SK-N-SH (cell line): ENCODE measurements at regions of chr1 and their contacts with region 1.

Region 1: DNA sequence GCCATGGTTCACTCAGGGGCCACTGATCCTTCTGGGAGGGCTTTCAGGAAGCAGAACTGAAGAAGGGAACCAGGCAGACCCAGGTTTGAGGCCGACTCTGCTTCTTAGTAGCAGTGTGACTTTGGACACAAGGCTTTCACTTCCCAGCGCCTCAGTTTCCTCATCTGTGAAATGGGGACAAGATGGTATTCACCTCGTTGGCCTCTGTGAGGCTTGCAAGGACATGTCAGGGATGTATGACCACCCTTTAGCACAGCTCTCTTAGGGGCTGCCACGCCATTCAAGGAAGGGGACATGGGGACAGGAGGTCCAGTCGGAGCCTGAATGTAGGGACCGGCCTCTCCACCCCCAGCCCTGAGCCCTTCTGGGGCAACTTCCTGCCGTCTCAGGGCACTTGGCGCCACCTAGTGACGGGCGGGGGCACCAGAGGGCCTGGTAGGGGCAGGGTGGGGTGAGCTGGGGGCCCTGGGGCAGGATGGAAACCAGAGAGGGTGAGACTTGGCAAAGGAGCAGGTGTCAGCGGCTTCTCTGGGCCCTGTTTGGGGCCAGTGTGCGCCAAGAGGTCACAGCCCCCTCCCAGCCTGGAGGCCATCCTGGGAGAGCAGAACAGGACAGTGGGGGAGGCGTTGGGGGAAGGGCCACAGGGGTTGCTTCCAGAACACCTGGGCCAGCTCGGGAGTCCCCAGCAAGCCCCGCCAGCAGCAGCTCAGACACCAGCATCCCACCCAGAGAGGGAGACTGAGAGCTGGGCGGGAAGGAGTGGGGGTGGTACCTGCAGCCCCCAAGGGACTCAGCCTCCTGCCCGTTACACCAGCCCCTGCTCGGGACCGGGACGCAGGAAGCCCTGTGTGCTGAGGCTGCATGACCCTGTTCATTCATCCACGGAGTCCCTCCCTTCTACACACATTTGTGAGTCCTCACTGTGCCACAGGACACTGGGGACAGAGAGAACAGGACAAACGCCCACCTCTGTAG is 102.5 kb upstream of the TARDBP start:
- DNase-seq: peak; percentile 85
- H3K4me3 ChIP-seq: no peak overlapping the region
- H3K27ac ChIP-seq: peak overlapping the region in 1 of 2 experiments; percentile 62; a peak in 2 of 4 replicates
- H3K4me1 ChIP-seq: peaks cover 0 to 38% of the 10 kb centered on the region in 2 experiments; a peak in 1 of 4 replicates
- H3K27me3 ChIP-seq: no peaks in the 10 kb centered on the region
- CTCF ChIP-seq: peak; percentile 58
- EP300 ChIP-seq: no peak
- RAD21 ChIP-seq: peak; percentile 61

Region 2: DNA sequence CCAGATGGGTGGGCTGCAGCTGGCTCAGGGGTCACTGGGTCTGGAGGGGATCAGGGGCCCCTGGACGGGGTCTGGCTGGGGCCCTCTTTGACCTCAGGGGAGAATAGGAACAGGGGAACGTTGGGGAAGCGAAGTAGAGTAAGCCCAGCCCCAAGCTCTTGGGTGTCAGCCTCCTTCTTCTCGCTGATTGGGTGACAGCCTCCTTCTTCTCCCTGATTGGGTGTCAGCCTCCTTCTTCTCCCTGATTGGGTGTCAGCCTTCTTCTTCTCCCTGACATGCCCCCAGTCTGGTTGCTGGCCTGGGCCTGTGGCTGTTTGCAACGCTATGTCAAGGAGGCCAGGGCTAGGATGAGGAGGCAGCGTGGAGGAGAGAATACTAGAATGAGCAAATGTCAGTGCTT is 36.8 kb before region 1 on chr1:
- CTCF ChIA-PET with region 1: interaction called, 10 read pairs
- POLR2A ChIA-PET with region 1: no interaction called
- DNase-seq: no peak
- H3K4me3 ChIP-seq: no peak overlapping the region
- H3K27ac ChIP-seq: no peak overlapping the region
- H3K4me1 ChIP-seq: peaks cover 0 to 2% of the 10 kb centered on the region in 2 experiments; a peak in 1 of 4 replicates
- H3K27me3 ChIP-seq: no peaks in the 10 kb centered on the region
- CTCF ChIP-seq: no peak
- EP300 ChIP-seq: no peak
- RAD21 ChIP-seq: no peak

Region 3: GRCh38 chr1:10888286-10888685 is 21.7 kb before region 1 on chr1:
- CTCF ChIA-PET with region 1: interaction called, 12 read pairs
- POLR2A ChIA-PET with region 1: no interaction called
- DNase-seq: no peak
- H3K4me3 ChIP-seq: no peak overlapping the region
- H3K27ac ChIP-seq: no peak overlapping the region
- H3K4me1 ChIP-seq: peaks cover 0 to 19% of the 10 kb centered on the region in 2 experiments; a peak in 1 of 4 replicates
- H3K27me3 ChIP-seq: peaks cover 7% of the 10 kb centered on the region; the same call in 1 of the 2 replicates
- CTCF ChIP-seq: no peak
- EP300 ChIP-seq: no peak
- RAD21 ChIP-seq: no peak

Region 4: GRCh38 chr1:10935255-10936123 is 25.5 kb after region 1 on chr1:
- CTCF ChIA-PET with region 1: interaction called, 10 read pairs
- POLR2A ChIA-PET with region 1: no interaction called
- DNase-seq: no peak
- H3K4me3 ChIP-seq: no peak overlapping the region
- H3K27ac ChIP-seq: no peak overlapping the region
- H3K4me1 ChIP-seq: peaks cover 0 to 17% of the 10 kb centered on the region in 2 experiments; a peak in 1 of 4 replicates
- H3K27me3 ChIP-seq: no peaks in the 10 kb centered on the region
- CTCF ChIP-seq: no peak
- EP300 ChIP-seq: no peak
- RAD21 ChIP-seq: no peak

Region 5: GRCh38 chr1:10941891-10942541 is 32.0 kb after region 1 on chr1:
- CTCF ChIA-PET with region 1: interaction called, 13 read pairs
- POLR2A ChIA-PET with region 1: interaction called, 7 read pairs
- DNase-seq: peak; percentile 92
- H3K4me3 ChIP-seq: peak overlapping the region in 1 of 2 experiments; percentile 51; a peak in 2 of 4 replicates
- H3K27ac ChIP-seq: no peak overlapping the region
- H3K4me1 ChIP-seq: peaks cover 0 to 55% of the 10 kb centered on the region in 2 experiments; a peak in 3 of 4 replicates
- H3K27me3 ChIP-seq: no peaks in the 10 kb centered on the region
- CTCF ChIP-seq: peak; percentile 88
- EP300 ChIP-seq: no peak
- RAD21 ChIP-seq: peak; percentile 80